Dorsolateral prefrontal cortex (tissue), 120 donors: ENCODE measurements at regions of chr3 and their contacts with region 1.

Region 1: DNA sequence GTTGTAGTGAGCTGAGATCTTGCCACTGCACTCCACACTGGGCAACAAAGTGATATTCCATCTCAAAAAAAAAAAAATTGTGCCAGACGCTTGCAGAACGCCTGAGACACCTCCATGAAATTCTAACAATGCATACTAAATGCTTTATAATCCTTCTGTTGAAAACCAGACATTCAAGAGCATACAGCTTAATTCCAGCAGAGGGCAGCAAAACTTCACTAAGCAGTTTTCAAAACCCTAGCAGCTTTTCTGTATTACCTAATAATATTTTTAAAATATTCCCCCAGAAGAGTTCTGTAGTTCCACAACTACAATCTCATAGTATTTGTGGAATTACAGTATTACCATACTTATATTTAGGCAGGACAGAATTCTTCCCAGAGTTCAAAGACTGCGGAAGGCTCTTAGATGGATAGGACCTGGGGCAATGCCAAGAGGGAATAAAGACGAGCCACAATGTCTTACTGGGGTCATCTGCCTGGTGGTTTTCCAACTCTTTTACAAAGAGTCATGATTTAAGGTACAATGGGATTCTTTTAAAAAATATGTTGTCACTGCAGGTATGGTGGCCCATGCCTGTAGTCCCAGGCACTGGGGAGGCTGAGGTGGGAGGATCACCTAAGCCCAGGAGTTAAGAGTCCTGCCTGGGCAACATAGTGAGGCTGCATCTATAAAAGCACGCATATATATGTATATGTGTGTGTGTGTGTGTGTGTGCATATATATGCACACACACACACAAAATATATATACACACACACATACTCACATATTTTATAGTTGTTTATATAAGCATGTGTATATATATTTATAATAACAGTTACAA is 19.6 kb upstream of the TASOR start:
- DNase-seq: peak in 2 of 10 donors; percentile 52 to 53
- H3K4me3 ChIP-seq: peak overlapping the region in 10 of 59 donors; percentile 7 to 35 (median 27)
- H3K27ac ChIP-seq: no peak overlapping the region
- H3K27me3 ChIP-seq: no peaks in the 10 kb centered on the region
- CTCF ChIP-seq: peak; percentile 76 to 100 (median 94)

Region 2: GRCh38 chr3:57094575-57094974 is 391.9 kb after region 1 on chr3:
- intact Hi-C with region 1: loop called in 1 of 2 experiments (anchors 10 kb)
- DNase-seq: no peak
- H3K4me3 ChIP-seq: no peak overlapping the region
- H3K27ac ChIP-seq: no peak overlapping the region
- H3K27me3 ChIP-seq: no peaks in the 10 kb centered on the region
- CTCF ChIP-seq: no peak